ENCODE measurements at regions of chr2 and their contacts with region 1.

Region 1: DNA sequence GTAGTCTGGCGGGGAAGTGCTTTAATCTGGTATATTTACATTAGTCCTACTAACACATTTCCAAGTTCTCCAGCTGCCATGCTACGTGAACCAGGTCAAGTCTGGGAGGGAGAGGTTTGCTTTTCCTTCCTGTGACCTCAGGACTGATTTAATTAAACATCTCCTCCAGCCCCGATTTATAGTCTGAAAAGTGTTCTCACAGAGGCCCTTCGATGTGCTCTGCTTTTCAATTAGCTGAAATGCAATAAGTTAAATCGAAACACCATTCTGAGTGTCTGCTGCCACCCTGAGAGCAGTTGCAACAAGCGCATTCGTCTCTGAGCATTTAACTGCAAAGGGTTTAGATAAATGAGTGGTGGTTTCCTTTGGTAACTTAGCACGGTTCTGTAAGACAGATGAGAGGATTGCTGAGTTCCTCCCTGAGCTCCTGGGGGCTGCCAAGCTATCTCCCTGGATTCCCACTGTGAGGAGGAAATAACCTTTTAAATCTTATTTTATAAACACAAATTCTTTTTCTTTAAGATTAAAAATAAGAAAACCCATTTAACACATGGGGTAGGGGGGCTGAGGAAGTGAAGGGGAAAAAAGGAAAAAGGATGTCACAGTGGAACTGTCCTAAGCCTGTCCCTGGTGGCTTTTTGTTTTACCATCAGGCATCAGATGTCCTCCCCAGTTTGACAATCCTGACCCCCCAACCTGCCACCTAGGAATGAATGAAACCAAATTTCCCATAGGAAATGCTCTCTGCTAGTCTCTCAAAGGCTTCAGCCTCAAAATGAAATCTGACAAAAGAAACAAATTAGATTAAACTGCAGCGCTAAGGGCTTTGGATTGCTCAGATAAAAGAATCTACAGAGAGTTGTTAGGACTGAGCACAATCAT is 56.5 kb upstream of the CREB1 start:
- DNase-seq: peak; percentile 79
- H3K4me3 Mint-ChIP-seq: no peak overlapping the region
- H3K27ac Mint-ChIP-seq: no peak overlapping the region
- H3K4me1 Mint-ChIP-seq: peaks cover 18% of the 10 kb centered on the region
- H3K27me3 Mint-ChIP-seq: no peaks in the 10 kb centered on the region

Region 2: DNA sequence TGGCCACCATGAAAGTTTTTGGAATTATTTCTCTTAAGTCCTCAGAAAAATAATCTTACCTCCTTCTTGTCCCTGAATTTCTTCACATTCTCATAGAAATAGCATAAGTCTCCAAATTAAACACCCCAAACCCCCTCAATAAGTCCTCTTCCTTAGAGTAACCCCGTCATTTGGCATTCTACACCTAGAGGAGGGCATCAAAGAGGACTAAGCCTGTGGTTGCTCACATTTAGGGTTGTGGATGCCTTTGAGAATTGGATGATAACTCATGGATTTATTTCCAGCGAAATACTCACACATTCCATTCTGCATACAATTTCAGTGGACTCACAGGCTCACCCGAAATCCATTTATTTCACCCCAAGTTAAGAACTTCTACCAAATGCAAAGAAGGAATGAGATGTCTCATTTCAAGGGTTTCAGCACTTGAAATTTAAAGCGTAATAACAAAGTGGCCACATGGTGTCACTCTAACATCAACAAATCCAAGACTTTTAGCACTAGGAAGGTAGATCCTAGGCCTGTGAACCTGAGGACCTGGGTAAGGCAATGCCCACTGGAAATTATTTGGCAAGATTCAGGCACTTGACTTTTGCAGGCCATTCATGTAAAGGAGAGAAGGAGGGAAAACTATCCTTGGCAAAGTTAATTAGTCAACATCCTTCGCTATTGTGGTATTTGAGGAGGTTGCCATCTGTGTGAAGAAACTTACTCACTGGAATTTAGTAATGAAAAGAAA is 779.7 kb before region 1 on chr2:
- CTCF ChIA-PET with region 1: interaction called, 8 read pairs
- intact Hi-C with region 1: loop called (anchors 1 kb)
- DNase-seq: peak; percentile 48
- H3K4me3 Mint-ChIP-seq: no peak overlapping the region
- H3K27ac Mint-ChIP-seq: no peak overlapping the region
- H3K4me1 Mint-ChIP-seq: peaks cover 3% of the 10 kb centered on the region
- H3K27me3 Mint-ChIP-seq: no peaks in the 10 kb centered on the region

Region 3: DNA sequence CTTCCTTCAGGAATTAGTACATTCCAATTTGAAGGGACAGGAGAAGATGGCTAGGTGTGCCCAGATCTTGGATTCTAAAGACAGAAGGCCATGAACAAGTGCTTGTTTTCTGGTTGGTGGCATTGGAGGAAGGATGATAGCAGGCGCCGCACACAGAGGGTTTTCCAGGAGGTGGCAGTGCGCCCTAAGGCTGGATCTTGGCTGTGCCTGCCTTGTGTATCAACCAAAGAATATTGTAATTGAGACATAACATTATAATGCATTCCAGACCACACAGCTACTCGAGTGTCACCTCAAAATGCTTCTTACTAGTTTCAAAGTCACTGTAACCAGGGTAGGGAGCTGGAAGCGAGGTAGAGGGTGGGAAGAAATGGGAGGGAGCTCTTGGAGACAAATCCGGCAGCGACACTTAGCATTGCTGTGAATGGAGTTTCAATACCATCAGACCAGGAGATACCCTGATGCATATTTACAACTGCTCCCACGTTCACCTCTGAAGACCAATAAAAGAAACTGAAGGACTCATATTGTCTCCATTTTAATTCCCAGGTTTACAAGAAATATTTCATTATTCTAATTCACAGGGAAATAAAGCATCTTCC is 491.4 kb before region 1 on chr2:
- CTCF ChIA-PET with region 1: interaction called, 16 read pairs
- intact Hi-C with region 1: loop called (anchors 1 kb)
- DNase-seq: peak; percentile 73
- H3K4me3 Mint-ChIP-seq: no peak overlapping the region
- H3K27ac Mint-ChIP-seq: no peak overlapping the region
- H3K4me1 Mint-ChIP-seq: peaks cover 14% of the 10 kb centered on the region
- H3K27me3 Mint-ChIP-seq: no peaks in the 10 kb centered on the region

Region 4: GRCh38 chr2:207223051-207223450 is 250.2 kb before region 1 on chr2:
- CTCF ChIA-PET with region 1: interaction called, 5 read pairs
- intact Hi-C with region 1: loop called (anchors 1 kb)
- DNase-seq: peak; percentile 50
- H3K4me3 Mint-ChIP-seq: no peak overlapping the region
- H3K27ac Mint-ChIP-seq: peak overlapping the region; percentile 32
- H3K4me1 Mint-ChIP-seq: peaks cover 43% of the 10 kb centered on the region
- H3K27me3 Mint-ChIP-seq: no peaks in the 10 kb centered on the region

Region 5: GRCh38 chr2:207283356-207283755 is 189.9 kb before region 1 on chr2:
- CTCF ChIA-PET with region 1: no interaction called
- intact Hi-C with region 1: loop called (anchors 2 kb)
- DNase-seq: peak; percentile 46
- H3K4me3 Mint-ChIP-seq: no peak overlapping the region
- H3K27ac Mint-ChIP-seq: peak overlapping the region; percentile 43
- H3K4me1 Mint-ChIP-seq: peaks cover 52% of the 10 kb centered on the region
- H3K27me3 Mint-ChIP-seq: no peaks in the 10 kb centered on the region

Region 6: GRCh38 chr2:207423886-207424285 is 49.4 kb before region 1 on chr2:
- CTCF ChIA-PET with region 1: no interaction called
- intact Hi-C with region 1: no loop called
- DNase-seq: peak; percentile 45
- H3K4me3 Mint-ChIP-seq: no peak overlapping the region
- H3K27ac Mint-ChIP-seq: no peak overlapping the region
- H3K4me1 Mint-ChIP-seq: peaks cover 8% of the 10 kb centered on the region
- H3K27me3 Mint-ChIP-seq: no peaks in the 10 kb centered on the region

Region 7: DNA sequence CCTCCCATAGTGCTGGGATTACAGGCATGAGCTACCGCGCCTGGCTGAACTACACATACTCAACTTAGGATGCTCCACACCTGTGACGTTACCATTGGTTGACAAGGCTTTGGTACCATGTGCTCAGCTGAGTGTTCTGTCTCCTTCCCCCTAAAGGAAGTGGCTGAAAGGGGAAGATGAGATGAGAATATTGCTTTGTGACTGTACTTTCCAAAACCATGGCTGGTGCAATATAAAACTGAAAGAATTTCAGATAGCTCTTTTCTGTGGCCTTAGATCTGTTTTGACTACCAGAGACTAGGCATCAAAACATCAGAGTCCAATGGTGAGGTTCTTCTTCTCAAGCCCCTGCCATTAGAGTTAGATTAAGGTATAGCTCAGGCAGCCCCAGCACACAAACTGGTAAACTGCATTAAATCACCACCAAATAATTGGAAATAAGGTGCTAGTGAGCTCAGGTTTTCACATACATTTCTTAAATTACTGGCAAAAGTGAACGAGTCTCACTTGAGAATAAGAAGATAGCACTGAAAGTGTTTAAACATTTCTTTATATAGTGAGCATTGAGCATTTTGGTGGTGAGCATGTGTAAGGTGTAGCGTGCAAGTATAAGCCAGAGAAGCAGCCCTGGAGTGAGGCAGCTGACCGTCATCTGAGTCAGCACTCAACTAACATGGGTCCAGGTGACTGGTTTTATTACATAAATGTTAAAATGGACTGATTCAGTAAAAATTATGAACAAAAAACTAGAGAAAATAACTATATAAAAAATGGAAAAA is 409.9 kb after region 1 on chr2:
- CTCF ChIA-PET with region 1: no interaction called
- intact Hi-C with region 1: no loop called
- DNase-seq: no peak
- H3K4me3 Mint-ChIP-seq: no peak overlapping the region
- H3K27ac Mint-ChIP-seq: no peak overlapping the region
- H3K4me1 Mint-ChIP-seq: no peaks in the 10 kb centered on the region
- H3K27me3 Mint-ChIP-seq: no peaks in the 10 kb centered on the region